Activated CD4-positive, alpha-beta T cell treated with anti-CD3 and anti-CD28 coated beads for 36 hours (primary cell): ENCODE measurements at regions of chr1 and their contacts with region 1.

Region 1: DNA sequence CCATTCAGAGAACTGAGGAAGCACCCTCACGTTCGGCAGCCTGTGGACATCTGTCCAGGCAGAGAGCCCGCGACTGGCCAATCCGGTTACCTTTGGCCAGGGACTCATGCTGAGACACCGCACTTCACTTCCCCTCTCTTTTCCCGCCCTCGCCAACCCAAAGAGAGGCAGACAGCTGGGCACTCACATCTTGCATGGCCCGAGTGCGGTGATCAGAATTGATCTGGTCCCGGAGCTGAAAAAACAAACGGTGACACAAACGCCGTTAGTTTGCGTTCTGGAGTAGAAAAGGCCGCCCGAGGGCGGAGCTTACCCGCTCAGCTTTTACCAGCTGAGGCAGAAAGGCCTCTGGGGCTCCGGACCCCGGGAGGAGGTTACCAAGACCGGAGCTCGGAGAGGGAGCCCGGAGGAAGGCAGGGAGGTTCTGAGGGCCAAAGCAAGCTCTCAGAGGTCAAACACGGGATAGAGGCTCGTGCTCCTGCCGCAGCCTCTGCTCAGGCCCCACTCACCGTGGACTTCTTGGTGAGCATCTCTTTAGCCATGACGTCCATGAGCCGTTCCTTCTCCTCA is 376 bp downstream of the SF3A3 start:
- DNase-seq: peak; percentile 67
- ATAC-seq: peak; percentile 31
- H3K4me3 Mint-ChIP-seq: peak overlapping the region; percentile 93
- H3K27ac Mint-ChIP-seq: peak overlapping the region; percentile 90
- H3K4me1 Mint-ChIP-seq: peaks cover 20% of the 10 kb centered on the region
- H3K27me3 Mint-ChIP-seq: no peaks in the 10 kb centered on the region

Region 2: GRCh38 chr1:37807555-37808368 is 181.7 kb before region 1 on chr1 and contains the starts of genes C1orf122 and YRDC:
- CTCF ChIA-PET with region 1: interaction called, 4 read pairs
- POLR2A ChIA-PET with region 1: no interaction called
- intact Hi-C with region 1: loop called (anchors 1 to 5 kb)
- DNase-seq: peak; percentile 95
- ATAC-seq: peak; percentile 92
- H3K4me3 Mint-ChIP-seq: peak within 1 kb of the TSS; percentile 90
- H3K27ac Mint-ChIP-seq: peak within 1 kb of the TSS; percentile 93
- H3K4me1 Mint-ChIP-seq: peaks cover 34% of the 10 kb centered on the region
- H3K27me3 Mint-ChIP-seq: no peaks in the 10 kb centered on the region
- total RNA-seq, gene C1orf122: 10.8 to 17.9 TPM
- total RNA-seq, gene YRDC: 22.9 to 36.3 TPM

Region 3: GRCh38 chr1:37890378-37891014 is 99.0 kb before region 1 on chr1:
- CTCF ChIA-PET with region 1: no interaction called
- POLR2A ChIA-PET with region 1: no interaction called
- intact Hi-C with region 1: loop called in 1 of 2 experiments (anchors 1 kb)
- DNase-seq: no peak
- ATAC-seq: no peak
- H3K4me3 Mint-ChIP-seq: no peak overlapping the region
- H3K27ac Mint-ChIP-seq: no peak overlapping the region
- H3K4me1 Mint-ChIP-seq: no peaks in the 10 kb centered on the region
- H3K27me3 Mint-ChIP-seq: no peaks in the 10 kb centered on the region

Region 4: DNA sequence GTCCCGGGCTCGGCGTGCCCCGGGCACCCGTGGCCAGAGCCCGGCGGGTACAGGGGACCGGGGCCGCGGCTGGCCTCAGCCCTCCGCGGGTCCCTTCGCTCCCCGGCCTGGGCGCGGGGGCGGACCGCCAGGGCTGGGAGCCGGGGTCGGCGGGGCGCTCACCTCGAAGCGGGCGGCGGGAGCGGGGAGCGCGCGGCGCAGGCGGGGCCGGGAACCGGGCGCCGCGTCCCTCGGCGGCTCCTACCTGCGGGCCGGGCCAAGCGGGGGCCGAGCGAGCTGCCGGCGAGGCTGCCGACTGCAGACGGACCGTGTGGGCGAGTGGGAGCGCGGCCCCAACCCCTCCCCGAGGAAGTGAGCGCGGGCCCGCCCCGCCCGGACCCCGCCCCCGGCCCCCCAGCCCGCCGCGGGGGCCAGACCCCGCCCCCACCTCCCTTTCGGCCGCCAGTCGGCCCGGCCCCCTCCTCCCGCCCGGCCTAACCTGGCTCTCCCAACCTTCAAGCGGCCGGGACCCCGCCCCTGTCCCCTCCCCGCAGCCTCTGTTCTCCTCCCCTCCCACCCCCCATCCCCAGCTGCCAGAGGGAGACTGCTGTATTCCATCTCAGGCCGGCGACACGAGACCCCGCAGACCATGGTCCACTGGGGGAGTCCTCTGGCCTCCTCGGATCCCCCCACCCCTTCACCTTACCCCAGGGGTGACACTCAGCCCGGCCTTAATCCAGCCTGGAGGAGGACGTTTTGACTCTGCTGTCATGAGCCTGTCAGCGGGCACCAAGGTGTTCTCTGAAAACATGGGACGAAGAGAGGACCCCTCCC is 16.0 kb after region 1 on chr1 and contains the start of gene FHL3:
- CTCF ChIA-PET with region 1: interaction called, 30 read pairs
- POLR2A ChIA-PET with region 1: interaction called, 3 read pairs
- intact Hi-C with region 1: loop called in 1 of 2 experiments (anchors 2 kb)
- DNase-seq: peak; percentile 69
- ATAC-seq: no peak
- H3K4me3 Mint-ChIP-seq: peak within 1 kb of the TSS; percentile 88
- H3K27ac Mint-ChIP-seq: peak within 1 kb of the TSS; percentile 88
- H3K4me1 Mint-ChIP-seq: peaks cover 49% of the 10 kb centered on the region
- H3K27me3 Mint-ChIP-seq: no peaks in the 10 kb centered on the region
- total RNA-seq, gene FHL3: 21.1 to 23.8 TPM

Region 5: GRCh38 chr1:38018864-38019343 is 29.5 kb after region 1 on chr1:
- CTCF ChIA-PET with region 1: interaction called, 7 read pairs
- POLR2A ChIA-PET with region 1: no interaction called
- intact Hi-C with region 1: loop called (anchors 1 kb)
- DNase-seq: no peak
- ATAC-seq: peak; percentile 64
- H3K4me3 Mint-ChIP-seq: no peak overlapping the region
- H3K27ac Mint-ChIP-seq: no peak overlapping the region
- H3K4me1 Mint-ChIP-seq: peaks cover 11% of the 10 kb centered on the region
- H3K27me3 Mint-ChIP-seq: no peaks in the 10 kb centered on the region

Region 6: GRCh38 chr1:38344716-38345115 is 355.3 kb after region 1 on chr1:
- CTCF ChIA-PET with region 1: no interaction called
- POLR2A ChIA-PET with region 1: no interaction called
- intact Hi-C with region 1: no loop called
- DNase-seq: peak; percentile 50
- ATAC-seq: peak; percentile 87
- H3K4me3 Mint-ChIP-seq: no peak overlapping the region
- H3K27ac Mint-ChIP-seq: no peak overlapping the region
- H3K4me1 Mint-ChIP-seq: peaks cover 4% of the 10 kb centered on the region
- H3K27me3 Mint-ChIP-seq: peaks cover 15% of the 10 kb centered on the region